Motor neuron (in vitro differentiated cells): ENCODE measurements at regions of chr13 and their contacts with region 1.

Region 1: GRCh38 chr13:31431722-31432137 is 232.0 kb downstream of the B3GLCT start:
- ATAC-seq: peak in 3 of 8 experiments; percentile 43 to 76 (median 46)
- H3K4me3 ChIP-seq: no peak overlapping the region
- H3K27ac ChIP-seq: no peak overlapping the region
- H3K4me1 ChIP-seq: no peaks in the 10 kb centered on the region

Region 2: DNA sequence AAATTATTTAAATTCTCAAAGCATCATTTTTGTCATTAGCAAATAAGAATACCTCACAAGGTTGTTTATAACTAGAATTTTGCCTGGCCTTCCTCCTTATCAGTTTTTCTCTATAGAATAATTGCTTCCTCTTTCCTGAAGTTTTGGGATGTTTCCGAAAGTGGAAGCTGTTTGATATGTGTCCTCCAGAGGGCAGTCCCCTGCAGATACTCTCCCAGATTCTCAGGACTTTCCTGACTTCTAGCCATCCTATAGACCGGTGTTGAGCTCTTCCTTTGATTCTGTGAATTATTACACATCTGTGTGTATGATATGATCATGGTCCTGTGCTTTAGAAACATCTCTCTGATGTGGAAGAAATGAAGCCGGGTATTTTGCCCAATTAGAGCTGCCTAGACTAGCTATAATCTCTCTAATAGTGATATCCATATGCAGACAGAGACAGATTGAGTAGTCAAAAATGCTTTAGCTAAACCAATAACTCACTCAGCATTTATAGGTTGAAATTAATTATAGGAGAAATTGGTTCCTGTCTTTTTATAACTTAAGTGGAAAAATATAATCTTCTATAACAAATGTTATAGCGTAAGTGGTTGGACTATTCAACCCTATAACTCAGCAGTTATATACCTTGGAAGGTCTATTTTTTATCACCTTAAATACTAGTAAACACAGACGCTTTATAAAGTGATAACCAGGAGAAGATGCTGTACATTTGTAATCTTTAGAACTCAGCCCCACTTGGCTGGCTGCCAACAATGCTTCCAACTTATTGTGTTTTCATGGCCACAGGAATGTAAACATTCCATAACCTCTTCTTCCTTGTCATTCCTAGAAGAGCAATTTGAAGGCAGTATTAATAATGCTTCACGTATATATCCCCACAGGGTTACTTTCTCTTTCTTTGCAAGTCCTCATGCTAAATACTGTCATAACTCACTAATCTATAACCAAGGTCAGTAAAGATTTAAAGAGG is 106.6 kb after region 1 on chr13:
- in situ Hi-C with region 1: loop called in 2 of 9 experiments (anchors 25 kb)
- ATAC-seq: peak in 3 of 8 experiments; percentile 32 to 75 (median 70)
- H3K4me3 ChIP-seq: no peak overlapping the region
- H3K27ac ChIP-seq: no peak overlapping the region
- H3K4me1 ChIP-seq: peaks cover 10 to 21% of the 10 kb centered on the region in 2 donors

Region 3: DNA sequence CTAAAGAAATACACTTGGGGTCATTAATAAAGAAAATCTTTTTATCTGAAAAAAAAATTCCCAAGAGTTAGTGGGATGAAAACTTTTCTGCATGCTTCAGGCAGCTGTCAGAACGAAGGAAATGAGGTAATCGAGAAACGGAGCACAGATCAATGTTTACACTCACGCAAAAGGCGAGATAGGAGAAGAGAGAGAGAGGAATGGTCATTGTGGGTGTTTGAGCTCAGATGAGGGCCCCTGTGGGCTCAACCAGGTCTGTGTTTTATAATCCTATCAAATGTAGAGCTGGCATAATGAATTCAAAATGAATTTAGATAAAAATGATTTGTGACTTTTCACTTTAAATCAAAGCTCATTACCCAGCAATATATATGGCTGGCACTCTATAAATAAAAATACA is 301.3 kb after region 1 on chr13:
- in situ Hi-C with region 1: loop called in 3 of 9 experiments (anchors 10 to 25 kb)
- ATAC-seq: peak in 1 of 8 experiments; percentile 23
- H3K4me3 ChIP-seq: no peak overlapping the region
- H3K27ac ChIP-seq: no peak overlapping the region
- H3K4me1 ChIP-seq: no peaks in the 10 kb centered on the region

Region 4: GRCh38 chr13:31742097-31742734 is 310.5 kb after region 1 on chr13:
- in situ Hi-C with region 1: loop called in 5 of 9 experiments (anchors 5 to 25 kb)
- ATAC-seq: peak in 7 of 8 experiments; percentile 51 to 88 (median 73)
- H3K4me3 ChIP-seq: no peak overlapping the region
- H3K27ac ChIP-seq: no peak overlapping the region
- H3K4me1 ChIP-seq: no peaks in the 10 kb centered on the region

Region 5: GRCh38 chr13:32905063-32905863 is 1473.5 kb after region 1 on chr13:
- in situ Hi-C with region 1: no loop called
- ATAC-seq: no peak
- H3K4me3 ChIP-seq: no peak overlapping the region
- H3K27ac ChIP-seq: no peak overlapping the region
- H3K4me1 ChIP-seq: no peaks in the 10 kb centered on the region